MCF 10A (cell line): ENCODE measurements at regions of chr12 and their contacts with region 1.

Region 1: DNA sequence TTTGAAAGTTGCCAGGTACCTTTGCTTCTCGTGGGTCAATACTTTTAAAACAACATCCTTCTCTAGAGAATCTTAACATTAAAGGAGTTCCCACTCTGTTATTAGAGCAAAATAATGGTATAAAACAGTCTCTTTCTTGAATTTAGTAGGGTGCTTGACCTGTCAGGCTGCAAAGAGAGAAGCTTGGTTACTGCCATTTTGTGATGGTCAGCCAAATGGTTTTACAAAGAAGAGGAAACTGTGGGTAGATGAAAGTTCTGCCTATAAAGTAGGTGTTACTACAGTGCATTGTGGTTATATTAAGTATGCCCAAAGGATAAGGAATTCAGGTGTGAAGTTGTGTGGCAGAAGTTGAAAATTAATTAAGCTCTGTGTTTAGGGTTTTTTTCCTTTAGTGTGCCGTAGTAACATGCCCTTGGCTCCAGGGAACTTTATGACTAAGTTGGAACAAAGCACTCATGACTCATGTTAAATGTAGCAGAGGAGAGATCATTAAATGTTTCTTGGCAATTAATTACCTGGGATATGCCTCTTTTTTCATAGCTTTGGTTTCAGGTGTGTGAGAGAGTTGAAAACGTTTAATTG is 354.0 kb upstream of the KITLG start:
- DNase-seq: peak; percentile 80
- H3K4me3 Mint-ChIP-seq: peak overlapping the region; percentile 20
- H3K27ac Mint-ChIP-seq: peak overlapping the region; percentile 44
- H3K4me1 Mint-ChIP-seq: peaks cover 15% of the 10 kb centered on the region
- H3K27me3 Mint-ChIP-seq: no peaks in the 10 kb centered on the region
- CTCF ChIP-seq: no peak

Region 2: GRCh38 chr12:88767699-88768098 is 166.6 kb before region 1 on chr12:
- CTCF ChIA-PET with region 1: no interaction called
- POLR2A ChIA-PET with region 1: no interaction called
- intact Hi-C with region 1: no loop called
- DNase-seq: no peak
- H3K4me3 Mint-ChIP-seq: no peak overlapping the region
- H3K27ac Mint-ChIP-seq: no peak overlapping the region
- H3K4me1 Mint-ChIP-seq: no peaks in the 10 kb centered on the region
- H3K27me3 Mint-ChIP-seq: no peaks in the 10 kb centered on the region
- CTCF ChIP-seq: no peak

Region 3: DNA sequence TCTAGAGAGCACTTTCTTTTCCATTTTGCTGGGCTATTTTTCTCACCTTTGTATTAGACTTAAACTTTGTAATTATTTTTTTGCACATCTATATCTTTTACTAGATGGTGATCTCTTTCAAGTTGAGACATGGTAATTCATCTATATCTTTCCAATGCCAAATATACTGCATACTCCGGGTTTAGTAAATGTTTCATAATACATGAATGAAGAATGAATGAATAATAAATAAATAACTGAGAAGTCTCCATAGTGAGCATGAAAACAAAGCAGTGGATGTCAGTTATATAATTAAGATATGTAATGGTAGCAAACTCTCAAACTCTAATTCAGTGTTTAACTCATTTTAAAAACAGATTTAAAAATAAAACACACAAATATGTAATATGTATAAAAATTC is 11.4 kb before region 1 on chr12:
- CTCF ChIA-PET with region 1: interaction called, 3 read pairs
- POLR2A ChIA-PET with region 1: interaction called, 23 read pairs
- intact Hi-C with region 1: no loop called
- DNase-seq: peak; percentile 26
- H3K4me3 Mint-ChIP-seq: no peak overlapping the region
- H3K27ac Mint-ChIP-seq: no peak overlapping the region
- H3K4me1 Mint-ChIP-seq: peaks cover 35% of the 10 kb centered on the region
- H3K27me3 Mint-ChIP-seq: no peaks in the 10 kb centered on the region
- CTCF ChIP-seq: no peak

Region 4: DNA sequence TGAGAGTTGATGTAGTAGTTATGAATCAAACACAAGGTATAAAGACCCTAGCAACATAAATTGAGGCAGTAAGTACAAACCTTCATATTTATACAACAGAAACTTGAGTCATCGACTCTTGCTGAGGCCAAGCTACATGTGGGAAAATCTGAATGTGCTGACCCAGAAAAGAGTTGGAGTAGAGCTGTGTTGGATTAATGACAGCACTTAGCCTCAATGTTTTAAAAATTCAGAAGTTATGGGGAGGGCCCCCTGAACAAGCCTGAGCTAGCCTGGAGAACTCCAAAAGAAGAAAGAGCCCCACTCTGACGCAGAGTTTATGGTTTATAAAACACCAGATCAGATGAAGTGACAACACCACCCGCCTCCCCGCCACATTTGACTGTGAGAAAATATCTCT is 318.0 kb after region 1 on chr12:
- CTCF ChIA-PET with region 1: no interaction called
- POLR2A ChIA-PET with region 1: no interaction called
- intact Hi-C with region 1: no loop called
- DNase-seq: no peak
- H3K4me3 Mint-ChIP-seq: no peak overlapping the region
- H3K27ac Mint-ChIP-seq: no peak overlapping the region
- H3K4me1 Mint-ChIP-seq: peaks cover 5% of the 10 kb centered on the region
- H3K27me3 Mint-ChIP-seq: no peaks in the 10 kb centered on the region
- CTCF ChIP-seq: no peak

Region 5: GRCh38 chr12:89451841-89452251 is 517.6 kb after region 1 on chr12:
- CTCF ChIA-PET with region 1: no interaction called
- POLR2A ChIA-PET with region 1: no interaction called
- intact Hi-C with region 1: no loop called
- DNase-seq: peak; percentile 21
- H3K4me3 Mint-ChIP-seq: peak overlapping the region; percentile 44
- H3K27ac Mint-ChIP-seq: peak overlapping the region; percentile 16
- H3K4me1 Mint-ChIP-seq: peaks cover 10% of the 10 kb centered on the region
- H3K27me3 Mint-ChIP-seq: no peaks in the 10 kb centered on the region
- CTCF ChIP-seq: no peak